ENCODE measurements at regions of chr7 and their contacts with region 1.

Region 1: GRCh38 chr7:100673300-100673941 is at the start of gene GNB2:
- DNase-seq: peak; percentile 97 to 98 (median 97)
- H3K4me3 ChIP-seq: peak within 1 kb of the TSS; percentile 80 to 91
- H3K4me3 Mint-ChIP-seq: peak within 1 kb of the TSS; percentile 94 to 99 (median 96)
- H3K27ac ChIP-seq: peak within 1 kb of the TSS; percentile 92
- H3K27ac Mint-ChIP-seq: peak within 1 kb of the TSS; percentile 96 to 99 (median 97)
- H3K4me1 ChIP-seq: peaks cover 30% of the 10 kb centered on the region
- H3K4me1 Mint-ChIP-seq: peaks cover 3 to 33% (median 14%) of the 10 kb centered on the region in 4 donors
- H3K27me3 ChIP-seq: no peaks in the 10 kb centered on the region
- H3K27me3 Mint-ChIP-seq: peaks cover 0 to 1% of the 10 kb centered on the region in 2 donors
- total RNA-seq, gene GNB2: 138 to 144 TPM

Region 2: GRCh38 chr7:100604028-100604975 is 69.1 kb before region 1 on chr7:
- CTCF ChIA-PET with region 1: no interaction called
- POLR2A ChIA-PET with region 1: interaction called, 32 read pairs
- intact Hi-C with region 1: loop called (anchors 2 kb)
- DNase-seq: peak; percentile 63 to 83 (median 68)
- H3K4me3 ChIP-seq: peak overlapping the region; percentile 34 to 58
- H3K4me3 Mint-ChIP-seq: peak overlapping the region; percentile 78 to 93 (median 87)
- H3K27ac ChIP-seq: peak overlapping the region; percentile 64
- H3K27ac Mint-ChIP-seq: peak overlapping the region; percentile 71 to 95 (median 91)
- H3K4me1 ChIP-seq: peaks cover 21% of the 10 kb centered on the region
- H3K4me1 Mint-ChIP-seq: peaks cover 9 to 35% (median 16%) of the 10 kb centered on the region in 4 donors
- H3K27me3 ChIP-seq: no peaks in the 10 kb centered on the region
- H3K27me3 Mint-ChIP-seq: no peaks in the 10 kb centered on the region

Region 3: DNA sequence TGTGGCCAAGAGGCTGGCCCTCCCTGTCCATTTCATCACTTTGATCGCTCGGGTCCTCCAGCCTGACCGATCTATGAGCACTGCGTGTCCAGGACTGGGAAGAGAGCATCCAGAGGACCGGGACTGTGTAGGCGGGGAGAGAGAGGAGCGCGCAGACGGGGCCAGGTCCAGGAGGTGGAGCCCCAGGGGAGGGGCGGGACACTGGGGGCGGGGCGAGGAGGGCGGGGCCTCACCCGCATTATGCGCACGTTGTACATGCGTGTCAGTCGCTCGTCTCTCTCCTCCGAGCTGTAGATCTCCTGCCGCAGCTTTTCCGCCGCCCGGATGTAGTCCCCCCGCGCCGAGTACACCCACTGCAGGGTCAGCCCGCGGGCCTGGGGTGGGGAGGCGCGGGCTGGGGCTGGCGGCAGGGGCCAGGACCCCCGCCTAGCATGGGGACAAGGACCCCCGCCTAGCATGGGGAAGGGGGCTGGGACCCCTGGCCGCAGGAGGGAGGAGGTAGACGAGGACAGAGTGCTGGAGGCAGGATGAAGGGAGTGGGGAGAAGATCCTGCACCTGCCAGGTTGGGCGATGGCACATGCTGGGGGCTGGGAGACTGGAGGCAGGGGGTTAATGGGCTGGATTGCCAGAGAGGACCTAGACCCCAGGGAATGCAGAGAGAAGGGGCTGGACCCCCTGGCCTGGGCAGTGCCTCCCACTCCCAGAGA is 46.7 kb before region 1 on chr7:
- CTCF ChIA-PET with region 1: no interaction called
- POLR2A ChIA-PET with region 1: interaction called, 12 read pairs
- intact Hi-C with region 1: loop called (anchors 1 kb)
- DNase-seq: peak; percentile 79 to 91 (median 82)
- H3K4me3 ChIP-seq: peak overlapping the region; percentile 36 to 67
- H3K4me3 Mint-ChIP-seq: peak overlapping the region; percentile 61 to 83 (median 76)
- H3K27ac ChIP-seq: peak overlapping the region; percentile 63
- H3K27ac Mint-ChIP-seq: peak overlapping the region; percentile 45 to 94 (median 83)
- H3K4me1 ChIP-seq: peaks cover 24% of the 10 kb centered on the region
- H3K4me1 Mint-ChIP-seq: peaks cover 15 to 41% (median 28%) of the 10 kb centered on the region in 4 donors
- H3K27me3 ChIP-seq: no peaks in the 10 kb centered on the region
- H3K27me3 Mint-ChIP-seq: no peaks in the 10 kb centered on the region

Region 4: GRCh38 chr7:100632951-100633717 is 40.3 kb before region 1 on chr7:
- CTCF ChIA-PET with region 1: interaction called, 13 read pairs
- POLR2A ChIA-PET with region 1: interaction called, 9 read pairs
- intact Hi-C with region 1: loop called (anchors 1 kb)
- DNase-seq: peak; percentile 45 to 66 (median 55)
- H3K4me3 ChIP-seq: peak overlapping the region; percentile 22 to 68
- H3K4me3 Mint-ChIP-seq: peak overlapping the region; percentile 76 to 89 (median 85)
- H3K27ac ChIP-seq: peak overlapping the region; percentile 58
- H3K27ac Mint-ChIP-seq: peak overlapping the region in 6 of 7 donors; percentile 42 to 91 (median 76)
- H3K4me1 ChIP-seq: peaks cover 8% of the 10 kb centered on the region
- H3K4me1 Mint-ChIP-seq: peaks cover 10 to 26% (median 18%) of the 10 kb centered on the region in 4 donors
- H3K27me3 ChIP-seq: no peaks in the 10 kb centered on the region
- H3K27me3 Mint-ChIP-seq: no peaks in the 10 kb centered on the region

Region 5: DNA sequence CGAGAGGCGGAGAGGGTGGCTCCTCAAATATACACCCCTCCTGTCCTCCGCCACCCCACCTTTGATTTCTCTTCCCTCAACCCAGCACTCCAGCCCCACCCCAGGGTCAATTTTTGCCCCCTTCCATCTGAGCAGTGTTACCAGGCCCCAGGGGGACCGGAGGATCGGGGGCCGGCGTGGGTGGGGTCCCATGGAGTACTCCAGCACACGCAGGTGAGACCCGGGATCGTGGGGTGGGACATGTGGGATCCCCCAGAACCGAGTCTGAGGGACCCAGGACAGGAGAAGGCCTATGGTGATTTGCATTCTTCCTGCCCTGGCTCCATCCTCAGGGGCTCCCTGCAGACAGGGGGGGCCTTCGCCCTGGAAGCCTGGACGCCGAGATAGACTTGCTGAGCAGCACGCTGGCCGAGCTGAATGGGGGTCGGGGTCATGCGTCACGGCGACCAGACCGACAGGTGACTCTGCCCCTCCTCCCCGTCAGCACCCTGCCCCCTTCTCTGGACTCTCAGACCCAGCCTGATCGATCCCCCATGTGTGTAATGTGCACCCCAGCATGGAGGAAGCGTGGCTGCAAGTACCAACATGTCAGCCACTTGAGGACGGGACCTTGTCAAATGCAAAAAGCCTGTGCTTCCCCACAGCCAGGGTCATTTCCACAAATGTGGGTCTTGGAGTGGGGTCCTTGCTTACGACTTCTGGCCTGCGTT is 194.5 kb after region 1 on chr7:
- CTCF ChIA-PET with region 1: no interaction called
- POLR2A ChIA-PET with region 1: no interaction called
- intact Hi-C with region 1: no loop called
- DNase-seq: no peak
- H3K4me3 ChIP-seq: peak overlapping the region in 1 of 2 donors; percentile 58
- H3K4me3 Mint-ChIP-seq: peak overlapping the region; percentile 43 to 78 (median 69)
- H3K27ac ChIP-seq: peak overlapping the region; percentile 66
- H3K27ac Mint-ChIP-seq: peak overlapping the region; percentile 59 to 89 (median 81)
- H3K4me1 ChIP-seq: peaks cover 10% of the 10 kb centered on the region
- H3K4me1 Mint-ChIP-seq: peaks cover 3 to 19% (median 6%) of the 10 kb centered on the region in 4 donors
- H3K27me3 ChIP-seq: no peaks in the 10 kb centered on the region
- H3K27me3 Mint-ChIP-seq: no peaks in the 10 kb centered on the region

Measured in CD4-positive, alpha-beta memory T cell (primary cell).